Mammary epithelial cell (primary cell): ENCODE measurements at regions of chr20 and their contacts with region 1.

Region 1: DNA sequence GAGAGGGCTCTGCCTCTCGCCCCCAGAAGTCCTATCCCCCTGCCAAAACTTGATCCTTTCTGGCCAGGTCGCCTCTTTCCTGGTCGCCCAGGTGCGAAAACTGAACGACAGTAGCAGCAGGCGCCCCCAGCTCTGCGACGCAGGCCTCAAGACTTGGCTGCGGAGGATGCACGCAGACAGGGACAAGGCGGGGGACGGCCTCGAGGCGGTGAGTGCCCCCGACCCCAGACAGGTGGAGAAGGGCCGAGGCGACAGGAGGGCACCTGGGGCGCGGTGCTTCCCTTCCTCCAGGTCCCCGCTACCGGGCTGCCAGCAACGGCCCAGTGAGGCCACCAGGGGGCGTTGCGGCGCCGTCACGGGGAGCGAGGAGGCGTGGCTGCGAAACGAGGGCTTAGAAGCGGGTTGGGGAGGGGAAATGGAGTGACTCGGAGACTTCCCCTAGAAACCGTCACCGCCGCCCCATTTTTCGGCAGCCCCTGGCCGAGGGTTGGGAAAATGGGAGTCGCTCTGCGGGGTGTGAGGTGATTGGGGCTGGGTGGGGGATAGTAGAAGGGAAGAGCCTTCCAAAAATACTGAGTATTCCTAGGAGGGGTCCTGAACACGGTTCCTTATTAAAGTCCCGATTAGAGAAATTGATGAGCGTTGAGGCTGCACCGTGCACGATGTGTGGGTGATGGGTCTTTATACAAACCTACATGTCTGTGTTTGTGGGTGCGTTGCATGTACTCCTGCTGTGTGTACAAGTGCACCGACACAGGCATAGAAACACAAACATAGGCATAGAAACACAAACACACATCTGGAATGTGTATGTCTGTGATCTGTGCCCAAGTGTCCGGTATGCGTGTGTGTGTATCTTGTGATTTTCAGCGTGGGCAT is 44.6 kb downstream of the ARHGAP40 start:
- DNase-seq: peak; percentile 53
- H3K4me3 ChIP-seq: peak overlapping the region in 2 of 3 experiments; percentile 23 to 34
- H3K27ac ChIP-seq: no peak overlapping the region
- H3K4me1 ChIP-seq: peaks cover 7% of the 10 kb centered on the region
- H3K27me3 ChIP-seq: no peaks in the 10 kb centered on the region
- CTCF ChIP-seq: peak; percentile 75 to 95

Region 2: GRCh38 chr20:38730989-38731737 is 84.9 kb after region 1 on chr20:
- CTCF ChIA-PET with region 1: no interaction called
- dilution Hi-C with region 1: no loop called
- in situ Hi-C with region 1: loop called in 1 of 2 experiments (anchors 5 kb)
- intact Hi-C with region 1: loop called (anchors 1 kb)
- DNase-seq: peak; percentile 53
- H3K4me3 ChIP-seq: peak overlapping the region; percentile 14 to 32 (median 28)
- H3K27ac ChIP-seq: no peak overlapping the region
- H3K4me1 ChIP-seq: peaks cover 3% of the 10 kb centered on the region
- H3K27me3 ChIP-seq: peaks cover 46% of the 10 kb centered on the region
- CTCF ChIP-seq: peak; percentile 96 to 97

Region 3: DNA sequence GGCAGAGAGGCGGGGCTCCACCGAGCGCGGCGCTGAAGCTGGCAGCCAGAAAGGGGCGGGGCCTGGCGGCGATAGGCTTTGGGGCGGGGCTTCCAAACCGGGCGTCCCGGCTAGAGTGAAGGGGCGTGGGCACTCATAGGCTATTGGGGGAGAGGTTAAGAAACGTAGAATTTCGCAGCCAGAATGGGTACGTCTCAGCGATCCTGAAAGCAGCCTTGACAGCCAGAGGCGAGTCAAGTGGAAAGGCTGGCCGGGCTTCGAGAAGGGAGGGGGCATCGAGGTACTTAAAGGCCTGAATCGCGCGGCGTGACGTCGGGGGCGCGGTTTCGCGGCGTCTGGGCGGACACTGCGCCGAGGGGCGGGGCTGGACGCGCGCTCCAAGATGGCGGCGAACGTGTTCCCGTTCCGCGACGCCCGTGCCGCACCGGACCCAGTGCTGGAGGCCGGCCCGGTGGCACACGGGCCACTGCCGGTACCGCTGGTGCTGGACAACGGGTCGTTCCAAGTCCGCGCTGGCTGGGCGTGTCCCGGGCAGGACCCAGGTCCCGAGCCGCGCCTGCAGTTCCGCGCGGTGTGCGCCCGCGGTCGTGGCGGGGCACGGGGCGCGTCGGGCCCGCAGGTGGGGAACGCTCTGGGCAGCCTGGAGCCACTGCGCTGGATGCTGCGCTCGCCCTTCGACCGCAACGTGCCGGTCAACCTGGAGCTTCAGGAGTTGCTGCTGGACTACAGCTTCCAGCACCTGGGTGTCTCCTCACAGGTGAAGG is 102.1 kb after region 1 on chr20 and contains the start of gene ACTR5:
- CTCF ChIA-PET with region 1: no interaction called
- dilution Hi-C with region 1: no loop called
- in situ Hi-C with region 1: loop called in 1 of 2 experiments (anchors 5 kb)
- intact Hi-C with region 1: loop called (anchors 1 kb)
- DNase-seq: peak; percentile 86
- H3K4me3 ChIP-seq: peak within 1 kb of the TSS; percentile 79 to 98 (median 92)
- H3K27ac ChIP-seq: peak within 1 kb of the TSS; percentile 71
- H3K4me1 ChIP-seq: peaks cover 5% of the 10 kb centered on the region
- H3K27me3 ChIP-seq: no peaks in the 10 kb centered on the region
- CTCF ChIP-seq: no peak
- total RNA-seq, gene ACTR5: 6.5 to 6.8 TPM

Region 4: GRCh38 chr20:38790200-38791053 is 144.2 kb after region 1 on chr20:
- CTCF ChIA-PET with region 1: no interaction called
- dilution Hi-C with region 1: no loop called
- in situ Hi-C with region 1: loop called in 1 of 2 experiments (anchors 10 kb)
- intact Hi-C with region 1: loop called (anchors 1 kb)
- DNase-seq: peak; percentile 77
- H3K4me3 ChIP-seq: no peak overlapping the region
- H3K27ac ChIP-seq: peak overlapping the region; percentile 43
- H3K4me1 ChIP-seq: peaks cover 6% of the 10 kb centered on the region
- H3K27me3 ChIP-seq: no peaks in the 10 kb centered on the region
- CTCF ChIP-seq: peak; percentile 55 to 69

Region 5: DNA sequence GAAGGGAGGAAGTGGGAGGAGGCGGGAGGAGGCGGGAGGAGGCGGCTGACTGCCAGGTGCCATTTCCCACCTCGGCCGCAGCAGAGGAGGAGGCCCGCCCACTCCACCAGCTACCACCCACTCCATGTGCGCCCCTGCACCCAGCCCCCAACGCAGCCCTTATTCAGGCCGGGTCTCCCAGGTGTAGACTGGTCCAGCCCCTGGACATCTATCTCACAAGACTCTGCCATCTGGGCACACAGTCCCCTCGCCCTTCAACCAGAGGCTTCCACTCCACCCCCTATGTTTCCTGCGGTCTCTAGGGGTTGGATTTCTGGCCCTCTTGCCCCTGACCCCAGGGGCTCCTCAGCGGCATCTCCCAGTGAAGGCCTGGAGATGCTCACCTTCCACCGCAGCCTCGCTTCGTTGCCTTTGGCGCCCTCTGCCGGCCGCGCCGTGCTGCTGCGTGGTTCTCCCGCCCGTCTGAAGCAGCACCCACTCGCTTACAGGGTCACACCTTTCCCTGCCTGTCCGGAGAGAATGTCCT is 247.4 kb after region 1 on chr20:
- CTCF ChIA-PET with region 1: interaction called, 3 read pairs
- dilution Hi-C with region 1: no loop called
- in situ Hi-C with region 1: loop called (anchors 10 kb)
- intact Hi-C with region 1: loop called (anchors 1 kb)
- DNase-seq: peak; percentile 18
- H3K4me3 ChIP-seq: no peak overlapping the region
- H3K27ac ChIP-seq: no peak overlapping the region
- H3K4me1 ChIP-seq: peaks cover 4% of the 10 kb centered on the region
- H3K27me3 ChIP-seq: no peaks in the 10 kb centered on the region
- CTCF ChIP-seq: peak; percentile 87 to 94